Ascending aorta (tissue), 2 donors: ENCODE measurements at regions of chr11 and their contacts with region 1.

Region 1: GRCh38 chr11:102216433-102217075 is 100.7 kb upstream of the BIRC3 start:
- DNase-seq: no peak
- H3K4me3 ChIP-seq: no peak overlapping the region
- H3K27ac ChIP-seq: peak overlapping the region; percentile 89 to 91
- H3K4me1 ChIP-seq: peaks cover 6 to 47% of the 10 kb centered on the region in 2 donors
- H3K27me3 ChIP-seq: no peaks in the 10 kb centered on the region
- CTCF ChIP-seq: no peak

Region 2: GRCh38 chr11:102047305-102047924 is 169.1 kb before region 1 on chr11 and contains the start of gene CFAP300:
- intact Hi-C with region 1: loop called (anchors 2 kb)
- DNase-seq: peak; percentile 67 to 95
- H3K4me3 ChIP-seq: peak within 1 kb of the TSS; percentile 59 to 78
- H3K27ac ChIP-seq: peak within 1 kb of the TSS; percentile 81 to 90
- H3K4me1 ChIP-seq: peaks cover 0 to 4% of the 10 kb centered on the region in 2 donors
- H3K27me3 ChIP-seq: no peaks in the 10 kb centered on the region
- CTCF ChIP-seq: no peak
- total RNA-seq, gene CFAP300: not detected

Region 3: GRCh38 chr11:102139081-102139498 is 77.5 kb before region 1 on chr11:
- intact Hi-C with region 1: loop called (anchors 2 kb)
- DNase-seq: peak; percentile 17 to 85
- H3K4me3 ChIP-seq: peak overlapping the region in 1 of 2 donors; percentile 26
- H3K27ac ChIP-seq: peak overlapping the region; percentile 82 to 92
- H3K4me1 ChIP-seq: peaks cover 4 to 41% of the 10 kb centered on the region in 2 donors
- H3K27me3 ChIP-seq: no peaks in the 10 kb centered on the region
- CTCF ChIP-seq: no peak

Region 4: GRCh38 chr11:102177974-102178631 is 38.5 kb before region 1 on chr11:
- intact Hi-C with region 1: loop called (anchors 5 kb)
- DNase-seq: no peak
- H3K4me3 ChIP-seq: peak overlapping the region in 1 of 2 donors; percentile 24
- H3K27ac ChIP-seq: peak overlapping the region; percentile 88
- H3K4me1 ChIP-seq: peaks cover 0 to 19% of the 10 kb centered on the region in 2 donors
- H3K27me3 ChIP-seq: no peaks in the 10 kb centered on the region
- CTCF ChIP-seq: no peak

Region 5: GRCh38 chr11:102197670-102198139 is 18.8 kb before region 1 on chr11:
- intact Hi-C with region 1: loop called (anchors 2 kb)
- DNase-seq: no peak
- H3K4me3 ChIP-seq: no peak overlapping the region
- H3K27ac ChIP-seq: peak overlapping the region in 1 of 2 donors; percentile 33
- H3K4me1 ChIP-seq: peaks cover 6 to 29% of the 10 kb centered on the region in 2 donors
- H3K27me3 ChIP-seq: no peaks in the 10 kb centered on the region
- CTCF ChIP-seq: no peak

Region 6: GRCh38 chr11:102268329-102269193 is 52.0 kb after region 1 on chr11:
- intact Hi-C with region 1: loop called (anchors 5 kb)
- DNase-seq: peak; percentile 37 to 88
- H3K4me3 ChIP-seq: peak overlapping the region; percentile 47 to 59
- H3K27ac ChIP-seq: peak overlapping the region; percentile 35 to 43
- H3K4me1 ChIP-seq: peaks cover 0 to 4% of the 10 kb centered on the region in 2 donors
- H3K27me3 ChIP-seq: no peaks in the 10 kb centered on the region
- CTCF ChIP-seq: peak; percentile 27 to 79 (median 47)